Stomach (tissue), 19 donors: ENCODE measurements at regions of chr1 and their contacts with region 1.

Region 1: DNA sequence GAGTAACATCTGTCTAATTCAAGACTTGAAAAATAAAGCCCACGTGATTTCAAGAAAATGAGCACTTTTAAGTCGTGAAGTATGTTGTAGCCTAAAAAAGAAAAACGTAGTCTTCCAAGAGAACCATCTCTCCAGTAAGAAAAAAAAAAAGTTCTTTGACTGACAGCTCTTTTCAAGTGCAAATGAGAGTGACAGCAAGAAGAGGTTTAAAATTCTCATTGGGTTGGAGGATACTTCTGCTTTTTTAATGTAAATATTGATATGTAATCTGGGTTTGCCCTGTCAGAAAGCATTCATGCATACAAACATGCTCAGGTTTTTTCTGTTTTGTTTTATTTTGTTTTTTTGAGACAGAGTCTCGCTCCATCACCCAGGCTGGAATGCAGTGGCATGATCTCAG is 32.3 kb upstream of the PRDM2 start:
- DNase-seq: no peak
- H3K4me3 ChIP-seq: no peak overlapping the region
- H3K27ac ChIP-seq: no peak overlapping the region
- H3K4me1 ChIP-seq: peaks cover 0 to 5% (median 1%) of the 10 kb centered on the region in 4 donors
- H3K27me3 ChIP-seq: no peaks in the 10 kb centered on the region
- CTCF ChIP-seq: no peak
- EP300 ChIP-seq: no peak
- POLR2A ChIP-seq: no peak

Region 2: DNA sequence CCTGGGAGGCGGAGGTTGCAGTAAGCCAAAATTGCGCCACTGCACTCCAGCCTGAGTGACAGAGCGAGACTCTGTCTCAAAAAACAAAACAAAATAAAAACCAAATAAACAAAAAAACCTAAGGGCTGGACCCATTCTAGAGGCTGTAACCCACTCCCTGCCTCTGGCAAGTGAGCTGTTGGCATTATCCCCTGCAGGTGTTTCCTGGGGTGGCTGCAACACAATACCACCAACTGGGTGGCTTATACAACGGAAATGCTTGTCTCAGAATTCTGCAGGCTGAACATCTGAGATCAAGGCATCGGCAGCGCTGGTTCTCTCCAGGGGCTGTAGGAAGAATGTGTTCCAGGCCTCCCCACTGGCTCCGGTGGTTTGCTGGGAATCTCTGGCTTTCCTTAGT is 169.1 kb before region 1 on chr1:
- intact Hi-C with region 1: no loop called
- DNase-seq: peak in 1 of 2 donors; percentile 20
- H3K4me3 ChIP-seq: no peak overlapping the region
- H3K27ac ChIP-seq: no peak overlapping the region
- H3K4me1 ChIP-seq: no peaks in the 10 kb centered on the region
- H3K27me3 ChIP-seq: peaks cover 0 to 39% (median 1%) of the 10 kb centered on the region in 3 donors
- CTCF ChIP-seq: no peak
- EP300 ChIP-seq: no peak
- POLR2A ChIP-seq: no peak

Region 3: GRCh38 chr1:13725714-13726175 is 58.1 kb after region 1 on chr1:
- intact Hi-C with region 1: loop called (anchors 5 kb)
- DNase-seq: peak; percentile 40 to 74
- H3K4me3 ChIP-seq: no peak overlapping the region
- H3K27ac ChIP-seq: no peak overlapping the region
- H3K4me1 ChIP-seq: peaks cover 0 to 41% (median 17%) of the 10 kb centered on the region in 4 donors
- H3K27me3 ChIP-seq: no peaks in the 10 kb centered on the region
- CTCF ChIP-seq: peak in 5 of 7 experiments; percentile 25 to 58 (median 38)
- EP300 ChIP-seq: no peak
- POLR2A ChIP-seq: no peak

Region 4: DNA sequence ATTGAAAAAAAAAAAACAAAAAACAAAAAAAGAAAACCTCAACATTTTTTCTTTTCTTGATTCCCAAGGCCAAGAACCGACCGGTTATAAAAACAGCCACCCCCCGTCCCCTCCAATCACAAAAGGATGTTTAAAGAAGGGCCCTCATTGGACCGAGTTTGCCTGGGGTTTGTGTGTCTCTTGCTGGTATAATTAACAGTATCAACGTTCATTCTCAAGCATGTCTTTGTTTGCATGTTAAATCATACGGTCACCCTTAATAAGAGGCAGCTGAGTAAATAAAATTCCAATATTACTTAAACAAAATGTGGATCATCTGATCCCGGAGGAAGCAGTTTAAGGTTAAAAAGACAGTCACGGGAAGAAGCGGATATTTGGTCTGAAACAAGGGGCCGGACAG is 233.3 kb after region 1 on chr1:
- intact Hi-C with region 1: no loop called
- DNase-seq: no peak
- H3K4me3 ChIP-seq: no peak overlapping the region
- H3K27ac ChIP-seq: peak overlapping the region in 1 of 5 donors; percentile 22
- H3K4me1 ChIP-seq: no peaks in the 10 kb centered on the region
- H3K27me3 ChIP-seq: peaks cover 0 to 11% (median 0%) of the 10 kb centered on the region in 3 donors
- CTCF ChIP-seq: no peak
- EP300 ChIP-seq: no peak
- POLR2A ChIP-seq: no peak